ENCODE measurements at regions of chr20 and their contacts with region 1.

Region 1: DNA sequence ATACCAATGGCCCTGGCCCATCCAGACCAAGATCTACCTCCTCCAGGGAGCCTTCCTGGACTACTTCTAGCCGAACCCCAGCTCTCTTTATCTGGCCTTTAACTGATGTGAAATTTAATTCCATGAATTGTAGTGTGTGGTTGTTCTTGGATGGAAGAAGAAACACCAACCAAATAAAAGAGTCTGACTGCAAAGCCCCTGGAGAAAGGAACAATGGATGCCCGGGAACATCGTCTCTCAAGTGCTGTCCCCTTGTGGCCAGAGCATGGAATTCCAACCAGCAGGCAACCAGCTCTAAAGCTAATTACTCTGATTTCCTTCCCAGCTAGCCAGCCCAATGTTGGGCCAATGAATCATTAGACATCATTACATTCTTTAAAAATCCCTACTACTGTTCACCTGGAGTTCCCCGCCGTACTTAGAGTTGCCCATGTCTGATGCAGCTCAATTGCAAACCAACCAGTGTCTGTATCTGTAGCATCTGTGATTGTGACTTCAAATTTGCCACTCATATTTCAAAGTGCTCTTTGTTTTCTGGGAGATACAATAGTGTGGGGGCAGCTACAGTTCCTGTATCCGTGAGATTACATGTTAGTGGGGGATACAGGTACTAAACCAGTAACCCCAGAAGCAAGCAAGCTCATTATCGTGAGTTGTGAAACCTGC is 141.1 kb downstream of the ANKRD60 start:
- DNase-seq: no peak
- H3K4me3 ChIP-seq: no peak overlapping the region
- H3K27ac ChIP-seq: no peak overlapping the region
- H3K4me1 ChIP-seq: no peaks in the 10 kb centered on the region
- H3K27me3 ChIP-seq: no peaks in the 10 kb centered on the region
- CTCF ChIP-seq: peak in 1 of 3 donors; percentile 25
- EP300 ChIP-seq: no peak
- POLR2A ChIP-seq: no peak

Region 2: GRCh38 chr20:57654363-57654997 is 432.8 kb before region 1 on chr20:
- intact Hi-C with region 1: loop called in 1 of 4 experiments (anchors 10 kb)
- DNase-seq: peak; percentile 41 to 73 (median 67)
- H3K4me3 ChIP-seq: no peak overlapping the region
- H3K27ac ChIP-seq: no peak overlapping the region
- H3K4me1 ChIP-seq: peaks cover 3% of the 10 kb centered on the region
- H3K27me3 ChIP-seq: no peaks in the 10 kb centered on the region
- CTCF ChIP-seq: peak; percentile 77 to 90 (median 87)
- EP300 ChIP-seq: no peak
- POLR2A ChIP-seq: no peak

Measured in ovary (tissue), 10 donors.